Dorsolateral prefrontal cortex (tissue), 120 donors: ENCODE measurements at regions of chr5 and their contacts with region 1.

Region 1: DNA sequence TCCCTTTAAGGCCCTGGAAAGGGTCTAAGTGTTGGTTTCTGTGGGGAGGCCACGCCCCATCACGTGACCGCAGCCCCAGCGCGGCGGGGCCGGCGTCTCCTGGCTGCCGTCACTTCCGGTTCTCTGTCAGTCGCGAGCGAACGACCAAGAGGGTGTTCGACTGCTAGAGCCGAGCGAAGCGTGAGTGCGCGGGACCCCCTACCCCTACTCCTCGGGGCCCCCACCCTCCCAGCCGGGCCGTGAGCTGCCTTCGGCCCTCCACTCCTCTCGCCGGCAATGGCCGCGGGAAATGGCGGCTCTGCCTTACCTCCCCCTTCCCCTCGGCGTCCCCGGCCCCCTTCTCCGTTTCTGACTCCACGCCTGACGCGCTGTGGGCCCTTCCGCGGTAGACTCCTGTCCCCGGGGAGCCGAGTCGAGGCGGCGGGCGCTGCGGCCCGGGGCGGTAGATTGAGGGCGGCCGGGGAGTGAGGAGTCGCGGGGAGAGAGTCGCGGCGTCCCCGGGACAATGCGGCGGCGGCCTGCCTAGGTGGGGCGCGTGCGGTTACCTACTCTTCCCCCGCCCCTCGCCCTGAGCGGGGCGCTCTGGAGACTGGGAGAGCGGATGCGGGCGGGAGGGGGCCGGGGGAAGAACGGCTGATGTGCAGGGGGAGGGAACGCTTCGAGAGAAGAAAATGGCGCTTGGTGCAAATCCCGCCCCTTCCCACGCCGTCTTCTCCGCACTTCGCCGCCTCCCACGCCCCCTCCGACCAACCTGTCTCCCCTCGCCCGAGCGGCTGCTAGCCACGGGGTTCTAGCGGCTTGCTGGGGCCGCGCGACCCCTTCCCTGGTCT is at the start of gene SUB1:
- DNase-seq: peak; percentile 90 to 97 (median 95)
- H3K4me3 ChIP-seq: peak within 1 kb of the TSS; percentile 67 to 100 (median 94)
- H3K27ac ChIP-seq: peak within 1 kb of the TSS; percentile 76 to 100 (median 97)
- H3K27me3 ChIP-seq: no peaks in the 10 kb centered on the region
- CTCF ChIP-seq: peak in 21 of 56 donors; percentile 3 to 51 (median 25)
- total RNA-seq, gene SUB1: 106 to 285 (median 202) TPM

Region 2: GRCh38 chr5:32217886-32218396 is 367.7 kb before region 1 on chr5:
- intact Hi-C with region 1: no loop called
- DNase-seq: peak in 4 of 10 donors; percentile 21 to 54 (median 44)
- H3K4me3 ChIP-seq: peak overlapping the region in 35 of 59 donors; percentile 2 to 53 (median 22)
- H3K27ac ChIP-seq: peak overlapping the region in 56 of 59 donors; percentile 11 to 92 (median 76)
- H3K27me3 ChIP-seq: no peaks in the 10 kb centered on the region
- CTCF ChIP-seq: no peak

Region 3: GRCh38 chr5:32312647-32313523 is 272.8 kb before region 1 on chr5 and contains the start of gene MTMR12:
- intact Hi-C with region 1: loop called (anchors 5 to 10 kb)
- DNase-seq: peak; percentile 98 to 100 (median 100)
- H3K4me3 ChIP-seq: peak within 1 kb of the TSS; percentile 64 to 100 (median 91)
- H3K27ac ChIP-seq: peak within 1 kb of the TSS; percentile 46 to 99 (median 92)
- H3K27me3 ChIP-seq: no peaks in the 10 kb centered on the region
- CTCF ChIP-seq: peak in 20 of 56 donors; percentile 6 to 40 (median 20)
- total RNA-seq, gene MTMR12: 24.4 to 67.2 (median 41.4) TPM

Region 4: GRCh38 chr5:32444431-32445286 is 141.0 kb before region 1 on chr5 and contains the start of gene ZFR:
- intact Hi-C with region 1: loop called in 1 of 2 experiments (anchors 5 kb)
- DNase-seq: peak; percentile 82 to 96 (median 90)
- H3K4me3 ChIP-seq: peak within 1 kb of the TSS; percentile 65 to 98 (median 88)
- H3K27ac ChIP-seq: peak within 1 kb of the TSS; percentile 64 to 97 (median 92)
- H3K27me3 ChIP-seq: no peaks in the 10 kb centered on the region
- CTCF ChIP-seq: peak in 18 of 56 donors; percentile 5 to 42 (median 17)
- total RNA-seq, gene ZFR: 85.2 to 155 (median 104) TPM

Region 5: GRCh38 chr5:32489791-32490582 is 95.7 kb before region 1 on chr5:
- intact Hi-C with region 1: loop called (anchors 2 to 5 kb)
- DNase-seq: peak in 9 of 10 donors; percentile 38 to 72 (median 61)
- H3K4me3 ChIP-seq: peak overlapping the region in 19 of 59 donors; percentile 3 to 39 (median 22)
- H3K27ac ChIP-seq: peak overlapping the region in 1 of 59 donors; percentile 21
- H3K27me3 ChIP-seq: no peaks in the 10 kb centered on the region
- CTCF ChIP-seq: peak; percentile 61 to 92 (median 80)

Region 6: DNA sequence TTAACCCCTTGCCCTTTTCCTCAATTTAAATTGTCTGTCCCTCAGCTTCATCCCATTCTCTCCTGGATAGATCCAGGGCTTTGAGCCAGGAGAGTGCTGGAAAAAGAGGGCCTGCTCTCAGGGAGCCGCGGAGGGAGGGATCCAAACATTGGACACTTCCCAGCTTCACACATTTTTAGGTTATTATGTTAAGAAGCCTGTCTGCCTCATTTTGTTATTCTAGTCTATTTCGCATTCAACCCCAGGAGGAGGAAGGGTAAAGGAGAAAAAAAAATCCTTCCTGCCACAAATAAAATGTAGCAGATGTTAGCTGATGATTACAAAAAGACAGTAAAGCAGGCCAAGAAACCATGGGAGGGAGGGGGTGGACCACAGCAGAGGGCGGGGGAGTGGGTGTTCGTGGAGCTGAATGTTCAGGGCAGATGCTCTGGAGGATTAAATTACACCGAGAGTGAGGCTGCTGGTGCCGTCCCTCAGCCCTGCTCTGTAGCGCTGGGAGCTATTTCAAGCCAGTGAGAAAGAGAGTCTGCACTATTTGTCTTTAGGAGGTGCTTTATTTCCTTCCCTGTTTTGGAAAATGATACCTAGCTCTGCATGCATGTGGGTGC is 80.6 kb before region 1 on chr5:
- intact Hi-C with region 1: loop called (anchors 5 kb)
- DNase-seq: peak; percentile 34 to 80 (median 66)
- H3K4me3 ChIP-seq: peak overlapping the region in 32 of 59 donors; percentile 1 to 47 (median 22)
- H3K27ac ChIP-seq: peak overlapping the region in 51 of 59 donors; percentile 5 to 86 (median 58)
- H3K27me3 ChIP-seq: no peaks in the 10 kb centered on the region
- CTCF ChIP-seq: no peak

Region 7: GRCh38 chr5:32996336-32996735 is 410.7 kb after region 1 on chr5:
- intact Hi-C with region 1: no loop called
- DNase-seq: no peak
- H3K4me3 ChIP-seq: no peak overlapping the region
- H3K27ac ChIP-seq: no peak overlapping the region
- H3K27me3 ChIP-seq: no peaks in the 10 kb centered on the region
- CTCF ChIP-seq: no peak